ENCODE measurements at regions of chr2 and their contacts with region 1.

Region 1: GRCh38 chr2:54597153-54597848 is 126.2 kb upstream of the EML6 start:
- DNase-seq: peak in 1 of 10 donors; percentile 13
- ATAC-seq: peak; percentile 39 to 41
- H3K4me3 Mint-ChIP-seq: peak overlapping the region; percentile 66 to 91 (median 86)
- H3K27ac Mint-ChIP-seq: peak overlapping the region; percentile 95 to 99 (median 98)
- H3K4me1 Mint-ChIP-seq: peaks cover 53 to 99% (median 96%) of the 10 kb centered on the region in 4 donors
- H3K27me3 Mint-ChIP-seq: no peaks in the 10 kb centered on the region

Region 2: GRCh38 chr2:54570925-54571694 is 26.2 kb before region 1 on chr2:
- POLR2A ChIA-PET with region 1: interaction called, 68 read pairs
- DNase-seq: peak; percentile 39 to 82 (median 70)
- ATAC-seq: peak; percentile 14 to 30
- H3K4me3 Mint-ChIP-seq: peak overlapping the region; percentile 71 to 93 (median 84)
- H3K27ac Mint-ChIP-seq: peak overlapping the region; percentile 94 to 99 (median 98)
- H3K4me1 Mint-ChIP-seq: peaks cover 48 to 96% (median 92%) of the 10 kb centered on the region in 4 donors
- H3K27me3 Mint-ChIP-seq: no peaks in the 10 kb centered on the region

Region 3: DNA sequence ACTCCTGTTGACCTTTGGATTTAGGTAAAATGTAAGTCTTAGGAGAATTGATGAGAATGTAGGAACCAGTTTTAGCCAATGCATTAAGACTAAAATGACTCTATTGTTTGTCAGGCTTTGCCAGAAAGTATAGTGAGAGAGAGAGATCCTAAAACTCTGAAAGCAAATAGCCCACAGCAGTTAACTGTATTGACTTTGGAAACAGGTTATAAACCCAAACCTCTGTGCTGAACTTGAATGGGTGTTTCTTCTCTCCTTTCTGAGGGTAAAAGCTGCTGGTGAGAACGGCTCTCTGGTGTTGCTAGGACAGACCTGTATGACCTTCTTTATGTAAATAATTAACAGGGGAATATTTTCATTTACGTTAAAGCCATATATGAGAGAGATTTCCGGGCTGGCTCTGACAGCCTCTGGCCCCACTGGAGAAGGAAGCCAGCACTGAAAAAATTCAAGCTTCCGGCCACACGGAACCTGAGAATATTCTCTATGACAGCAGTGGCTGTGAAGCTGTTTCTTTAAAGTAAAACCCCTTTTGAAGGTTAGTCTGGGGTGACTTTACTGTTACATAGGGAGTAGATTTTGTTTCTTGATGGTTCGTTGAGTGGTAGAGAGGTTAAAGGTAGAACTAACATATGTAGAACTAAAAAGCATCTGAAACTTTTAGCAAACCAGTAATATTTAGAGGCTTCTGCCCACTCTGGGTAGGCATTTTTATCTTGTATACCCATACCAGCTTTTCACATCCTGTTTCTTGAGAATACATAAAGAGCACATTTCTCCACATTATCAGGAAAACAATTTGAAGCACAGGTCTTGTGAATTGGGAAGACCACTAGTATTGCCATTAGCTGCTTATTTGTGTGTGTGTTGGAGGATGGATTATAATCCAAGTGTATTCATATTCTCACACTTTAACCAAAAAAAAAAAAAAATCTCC is 17.3 kb before region 1 on chr2:
- POLR2A ChIA-PET with region 1: interaction called, 68 read pairs
- DNase-seq: peak in 9 of 10 donors; percentile 56 to 84 (median 67)
- ATAC-seq: peak; percentile 74 to 91
- H3K4me3 Mint-ChIP-seq: peak overlapping the region; percentile 71 to 89 (median 78)
- H3K27ac Mint-ChIP-seq: peak overlapping the region; percentile 87 to 99 (median 98)
- H3K4me1 Mint-ChIP-seq: peaks cover 49 to 96% (median 94%) of the 10 kb centered on the region in 4 donors
- H3K27me3 Mint-ChIP-seq: no peaks in the 10 kb centered on the region